ENCODE measurements at regions of chr2 and their contacts with region 1.

Region 1: GRCh38 chr2:156332534-156333273 is at the start of gene NR4A2:
- DNase-seq: peak; percentile 94
- H3K4me3 Mint-ChIP-seq: peak within 1 kb of the TSS; percentile 87
- H3K27ac Mint-ChIP-seq: peak within 1 kb of the TSS; percentile 99
- H3K4me1 Mint-ChIP-seq: peaks cover 12% of the 10 kb centered on the region
- H3K27me3 Mint-ChIP-seq: no peaks in the 10 kb centered on the region
- CTCF ChIP-seq: no peak
- total RNA-seq, gene NR4A2: 1.4 and 2.6 TPM in 2 replicates

Region 2: DNA sequence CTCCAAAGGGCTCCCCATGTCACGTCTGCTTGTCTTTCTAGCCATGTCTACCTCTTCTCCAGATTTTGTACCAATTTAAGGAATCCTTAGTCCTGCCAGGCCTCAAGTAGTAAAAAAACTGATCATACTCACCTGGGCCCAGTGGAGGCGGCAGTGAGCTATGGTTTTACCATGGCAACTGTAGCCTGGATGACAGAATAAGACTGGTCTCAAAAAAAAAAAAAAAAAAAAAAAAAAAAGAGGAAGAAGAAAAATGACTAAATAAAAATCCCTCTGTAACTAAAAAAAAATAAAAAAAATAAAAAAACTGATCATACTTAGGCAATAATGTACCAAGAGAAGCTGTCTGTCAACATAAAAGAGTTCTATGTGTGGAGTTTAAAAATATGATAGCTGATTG is 221.8 kb before region 1 on chr2:
- CTCF ChIA-PET with region 1: no interaction called
- POLR2A ChIA-PET with region 1: no interaction called
- intact Hi-C with region 1: loop called (anchors 5 kb)
- DNase-seq: peak; percentile 46
- H3K4me3 Mint-ChIP-seq: no peak overlapping the region
- H3K27ac Mint-ChIP-seq: no peak overlapping the region
- H3K4me1 Mint-ChIP-seq: peaks cover 7% of the 10 kb centered on the region
- H3K27me3 Mint-ChIP-seq: no peaks in the 10 kb centered on the region
- CTCF ChIP-seq: no peak

Region 3: DNA sequence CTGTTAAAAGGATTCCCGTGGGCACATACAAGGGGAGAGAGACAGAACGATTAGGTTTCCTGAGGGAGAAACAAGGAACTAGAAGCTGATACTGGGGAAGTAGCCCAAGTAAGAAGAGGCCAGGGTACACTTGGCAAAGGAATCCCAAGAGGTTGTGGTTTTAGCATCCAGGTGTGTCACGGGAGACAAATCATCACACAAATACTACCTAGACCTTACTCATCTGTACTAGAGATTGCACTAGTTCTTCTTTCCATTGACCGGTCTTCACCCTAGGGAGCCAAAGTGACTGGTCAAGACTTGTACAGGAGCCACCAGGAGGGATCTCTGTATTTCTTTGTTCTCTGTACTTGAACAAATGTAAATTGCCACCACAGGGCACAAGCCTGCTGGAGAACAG is 14.0 kb after region 1 on chr2:
- CTCF ChIA-PET with region 1: interaction called, 15 read pairs
- POLR2A ChIA-PET with region 1: interaction called, 46 read pairs
- intact Hi-C with region 1: no loop called
- DNase-seq: peak; percentile 17
- H3K4me3 Mint-ChIP-seq: no peak overlapping the region
- H3K27ac Mint-ChIP-seq: no peak overlapping the region
- H3K4me1 Mint-ChIP-seq: peaks cover 13% of the 10 kb centered on the region
- H3K27me3 Mint-ChIP-seq: no peaks in the 10 kb centered on the region
- CTCF ChIP-seq: no peak

Region 4: GRCh38 chr2:156435715-156436496 is 103.2 kb after region 1 on chr2 and contains the start of gene GPD2:
- CTCF ChIA-PET with region 1: interaction called, 10 read pairs
- POLR2A ChIA-PET with region 1: interaction called, 90 read pairs
- intact Hi-C with region 1: no loop called
- DNase-seq: peak; percentile 93
- H3K4me3 Mint-ChIP-seq: peak within 1 kb of the TSS; percentile 88
- H3K27ac Mint-ChIP-seq: peak within 1 kb of the TSS; percentile 77
- H3K4me1 Mint-ChIP-seq: peaks cover 29% of the 10 kb centered on the region
- H3K27me3 Mint-ChIP-seq: no peaks in the 10 kb centered on the region
- CTCF ChIP-seq: no peak
- total RNA-seq, gene GPD2: 37.4 and 62.5 TPM in 2 replicates

Region 5: GRCh38 chr2:156589381-156590079 is 256.8 kb after region 1 on chr2:
- CTCF ChIA-PET with region 1: interaction called, 66 read pairs
- POLR2A ChIA-PET with region 1: interaction called, 30 read pairs
- intact Hi-C with region 1: loop called (anchors 1 kb)
- DNase-seq: peak; percentile 51
- H3K4me3 Mint-ChIP-seq: no peak overlapping the region
- H3K27ac Mint-ChIP-seq: no peak overlapping the region
- H3K4me1 Mint-ChIP-seq: no peaks in the 10 kb centered on the region
- H3K27me3 Mint-ChIP-seq: no peaks in the 10 kb centered on the region
- CTCF ChIP-seq: peak; percentile 60

Region 6: DNA sequence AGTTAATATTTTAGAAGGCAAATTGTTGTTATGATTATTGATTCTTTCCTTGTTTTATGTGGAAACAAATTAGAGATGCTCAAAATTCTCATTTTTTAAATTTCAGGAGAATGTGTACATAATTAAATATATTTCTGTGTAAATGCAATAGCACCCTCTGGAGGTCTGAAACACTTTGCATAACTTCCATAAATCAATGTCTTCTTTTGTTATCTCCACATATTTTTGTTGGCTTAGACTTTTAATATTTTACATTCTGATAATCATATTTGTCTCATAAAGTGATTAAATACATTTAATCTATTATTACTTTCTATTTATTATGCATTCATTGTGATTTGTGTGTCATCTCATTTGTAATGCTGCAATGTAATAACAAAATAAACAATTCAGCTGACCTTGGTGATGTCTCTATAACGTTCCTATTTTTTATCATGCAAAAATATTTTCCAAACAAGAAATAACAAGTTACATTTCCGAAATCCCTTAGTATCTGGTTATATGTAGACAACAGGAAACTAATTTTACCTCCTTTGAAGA is 723.0 kb after region 1 on chr2:
- CTCF ChIA-PET with region 1: interaction called, 9 read pairs
- POLR2A ChIA-PET with region 1: no interaction called
- intact Hi-C with region 1: loop called (anchors 5 kb)
- DNase-seq: peak; percentile 40
- H3K4me3 Mint-ChIP-seq: peak overlapping the region; percentile 41
- H3K27ac Mint-ChIP-seq: peak overlapping the region; percentile 80
- H3K4me1 Mint-ChIP-seq: peaks cover 19% of the 10 kb centered on the region
- H3K27me3 Mint-ChIP-seq: no peaks in the 10 kb centered on the region
- CTCF ChIP-seq: peak; percentile 41